ENCODE measurements at regions of chr9 and their contacts with region 1.

Region 1: DNA sequence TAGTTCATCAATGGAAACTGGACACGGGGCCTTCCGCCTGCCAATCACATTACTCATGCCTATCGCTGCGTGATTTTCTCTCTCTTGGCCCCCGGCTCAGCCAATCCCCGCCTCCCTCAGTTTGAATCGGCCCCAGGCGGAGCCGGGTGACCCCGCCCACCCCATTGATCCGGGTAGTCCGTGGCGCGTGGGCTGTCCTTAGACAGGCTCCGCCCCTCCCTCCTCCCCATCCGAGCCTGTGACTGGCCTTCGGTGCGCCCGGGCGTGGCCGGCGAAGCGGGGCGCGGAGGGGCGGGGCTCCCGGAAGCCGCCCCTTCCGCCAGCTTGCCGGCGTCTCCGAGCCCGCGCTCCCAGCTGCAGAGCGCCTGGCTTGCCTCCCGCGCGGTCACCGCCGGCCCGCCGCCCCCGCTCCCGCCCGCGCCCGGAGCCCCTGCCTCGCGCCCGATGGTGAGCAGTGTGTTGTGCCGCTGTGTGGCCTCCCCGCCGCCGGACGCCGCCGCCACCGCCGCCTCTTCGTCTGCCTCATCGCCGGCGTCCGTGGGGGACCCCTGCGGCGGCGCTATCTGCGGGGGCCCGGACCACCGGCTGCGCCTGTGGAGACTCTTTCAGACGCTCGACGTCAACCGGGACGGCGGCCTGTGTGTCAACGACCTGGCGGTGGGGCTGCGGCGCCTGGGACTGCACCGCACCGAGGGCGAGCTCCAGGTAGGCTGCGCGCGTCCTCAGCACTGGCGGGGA is at the start of gene SLC25A25:
- DNase-seq: peak; percentile 100
- H3K4me3 ChIP-seq: peak within 1 kb of the TSS; percentile 87 to 92
- H3K4me3 Mint-ChIP-seq: peak within 1 kb of the TSS in 7 of 8 donors; percentile 89 to 98 (median 94)
- H3K27ac ChIP-seq: peak within 1 kb of the TSS; percentile 86
- H3K27ac Mint-ChIP-seq: peak within 1 kb of the TSS; percentile 83 to 97 (median 91)
- H3K4me1 ChIP-seq: peaks cover 80% of the 10 kb centered on the region
- H3K4me1 Mint-ChIP-seq: peaks cover 36 to 56% (median 45%) of the 10 kb centered on the region in 4 donors
- H3K27me3 ChIP-seq: no peaks in the 10 kb centered on the region
- H3K27me3 Mint-ChIP-seq: no peaks in the 10 kb centered on the region
- total RNA-seq, gene SLC25A25: 22.0 to 26.9 TPM

Region 2: DNA sequence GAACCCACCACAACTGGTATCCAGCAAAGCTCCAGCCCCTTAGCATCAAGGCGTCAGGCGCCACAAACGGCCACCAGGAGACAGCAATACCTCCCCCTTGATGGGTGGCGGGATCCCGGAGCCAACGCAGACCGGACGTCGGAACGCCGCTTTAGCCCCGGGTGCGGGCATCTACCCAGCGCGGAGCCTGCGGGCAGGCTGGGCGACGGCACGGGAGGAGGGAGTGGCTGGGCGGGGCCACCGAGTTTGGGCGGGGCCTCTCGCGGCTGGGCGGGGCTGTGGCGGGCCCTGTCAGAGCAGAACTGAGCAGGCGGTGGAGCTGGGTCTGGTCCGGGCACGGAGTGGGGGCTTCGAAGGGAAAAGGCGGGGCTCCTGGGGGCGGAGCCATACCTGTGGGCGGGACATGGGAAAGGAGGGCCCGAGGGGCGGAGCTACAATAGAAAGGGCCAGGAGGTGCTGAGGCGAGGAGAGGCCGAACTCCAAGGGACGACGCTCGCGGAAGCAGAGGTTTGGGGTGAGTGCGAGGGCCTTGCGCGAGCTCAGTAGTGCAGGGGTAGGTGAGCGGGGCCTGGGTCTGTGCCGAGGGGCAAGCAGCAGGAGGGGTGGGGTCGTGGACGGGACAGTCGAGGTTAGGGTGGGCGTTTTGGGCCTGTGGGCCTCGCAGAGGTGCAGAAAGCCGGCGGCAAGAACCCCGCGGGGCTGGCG is 843.7 kb before region 1 on chr9:
- CTCF ChIA-PET with region 1: no interaction called
- POLR2A ChIA-PET with region 1: interaction called, 3 read pairs
- intact Hi-C with region 1: loop called (anchors 10 kb)
- DNase-seq: peak; percentile 86 to 90 (median 87)
- H3K4me3 ChIP-seq: peak overlapping the region in 1 of 2 donors; percentile 53
- H3K4me3 Mint-ChIP-seq: peak overlapping the region; percentile 77 to 90 (median 87)
- H3K27ac ChIP-seq: no peak overlapping the region
- H3K27ac Mint-ChIP-seq: peak overlapping the region; percentile 79 to 96 (median 93)
- H3K4me1 ChIP-seq: peaks cover 35% of the 10 kb centered on the region
- H3K4me1 Mint-ChIP-seq: peaks cover 23 to 48% (median 33%) of the 10 kb centered on the region in 4 donors
- H3K27me3 ChIP-seq: no peaks in the 10 kb centered on the region
- H3K27me3 Mint-ChIP-seq: peaks cover 0 to 6% of the 10 kb centered on the region in 2 donors

Region 3: DNA sequence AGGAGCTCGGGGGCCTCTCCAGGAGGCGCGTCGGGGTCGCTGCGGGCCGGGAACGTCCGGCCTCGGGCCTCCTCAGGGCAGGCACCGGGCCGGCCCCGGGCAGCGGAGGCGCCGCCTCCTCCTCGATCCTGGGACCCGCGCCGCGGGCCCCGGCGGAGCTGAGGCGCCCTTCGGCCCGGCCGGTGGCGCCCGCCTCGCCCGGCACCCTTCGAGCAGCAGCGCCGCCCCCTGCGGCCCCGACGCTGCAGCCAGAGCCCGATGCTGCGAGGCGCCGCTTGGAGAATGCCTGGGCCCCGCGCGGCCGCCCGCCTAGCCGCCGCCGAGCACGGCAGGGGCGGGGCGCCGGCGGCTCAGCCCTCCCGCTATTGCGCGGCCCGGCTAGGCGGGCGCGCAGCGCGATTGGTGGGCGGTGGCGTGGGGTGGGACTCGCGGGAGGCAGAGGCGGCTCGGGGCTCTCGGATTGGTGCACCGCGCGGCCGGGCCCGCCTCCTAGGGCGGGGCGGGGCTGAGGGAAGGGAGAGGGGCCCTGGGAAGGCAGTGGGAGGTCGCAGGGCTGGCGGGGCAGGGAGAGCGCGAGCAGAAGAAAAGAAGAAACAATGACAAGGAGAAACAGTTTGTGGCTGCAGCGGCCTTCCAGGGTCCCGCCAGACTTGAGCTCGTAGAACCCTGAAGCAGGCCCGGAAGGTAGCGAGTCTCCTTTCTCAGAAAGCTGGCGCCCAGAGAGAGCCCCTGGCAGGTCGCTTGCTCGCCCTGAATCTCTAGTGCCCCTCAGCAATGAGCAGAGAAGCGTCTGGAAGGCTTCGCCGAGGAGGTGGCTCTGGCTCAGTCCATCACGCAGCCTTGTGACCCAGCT is 87.1 kb before region 1 on chr9 and contains the start of gene EEIG1:
- CTCF ChIA-PET with region 1: interaction called, 3 read pairs
- POLR2A ChIA-PET with region 1: interaction called, 22 read pairs
- intact Hi-C with region 1: loop called (anchors 1 kb)
- DNase-seq: peak; percentile 96 to 99 (median 97)
- H3K4me3 ChIP-seq: peak within 1 kb of the TSS; percentile 72 to 92
- H3K4me3 Mint-ChIP-seq: peak within 1 kb of the TSS; percentile 94 to 98 (median 97)
- H3K27ac ChIP-seq: peak within 1 kb of the TSS; percentile 78
- H3K27ac Mint-ChIP-seq: peak within 1 kb of the TSS; percentile 92 to 97 (median 94)
- H3K4me1 ChIP-seq: peaks cover 46% of the 10 kb centered on the region
- H3K4me1 Mint-ChIP-seq: peaks cover 27 to 51% (median 38%) of the 10 kb centered on the region in 4 donors
- H3K27me3 ChIP-seq: no peaks in the 10 kb centered on the region
- H3K27me3 Mint-ChIP-seq: no peaks in the 10 kb centered on the region
- total RNA-seq, gene EEIG1: 516 to 550 TPM

Region 4: GRCh38 chr9:128081056-128081455 is 13.0 kb after region 1 on chr9:
- CTCF ChIA-PET with region 1: interaction called, 15 read pairs
- POLR2A ChIA-PET with region 1: interaction called, 63 read pairs
- intact Hi-C with region 1: loop called (anchors 1 kb)
- DNase-seq: no peak
- H3K4me3 ChIP-seq: no peak overlapping the region
- H3K4me3 Mint-ChIP-seq: peak overlapping the region in 1 of 8 donors; percentile 22
- H3K27ac ChIP-seq: no peak overlapping the region
- H3K27ac Mint-ChIP-seq: peak overlapping the region; percentile 3 to 83 (median 57)
- H3K4me1 ChIP-seq: peaks cover 52% of the 10 kb centered on the region
- H3K4me1 Mint-ChIP-seq: peaks cover 42 to 67% (median 54%) of the 10 kb centered on the region in 4 donors
- H3K27me3 ChIP-seq: no peaks in the 10 kb centered on the region
- H3K27me3 Mint-ChIP-seq: no peaks in the 10 kb centered on the region

Region 5: GRCh38 chr9:128103589-128103962 is 35.5 kb after region 1 on chr9:
- CTCF ChIA-PET with region 1: interaction called, 11 read pairs
- POLR2A ChIA-PET with region 1: interaction called, 5 read pairs
- intact Hi-C with region 1: no loop called
- DNase-seq: peak in 4 of 5 donors; percentile 29 to 41 (median 31)
- H3K4me3 ChIP-seq: no peak overlapping the region
- H3K4me3 Mint-ChIP-seq: peak overlapping the region in 2 of 8 donors; percentile 17 to 47
- H3K27ac ChIP-seq: no peak overlapping the region
- H3K27ac Mint-ChIP-seq: peak overlapping the region; percentile 77 to 94 (median 84)
- H3K4me1 ChIP-seq: peaks cover 42% of the 10 kb centered on the region
- H3K4me1 Mint-ChIP-seq: peaks cover 14 to 55% (median 30%) of the 10 kb centered on the region in 4 donors
- H3K27me3 ChIP-seq: no peaks in the 10 kb centered on the region
- H3K27me3 Mint-ChIP-seq: no peaks in the 10 kb centered on the region

Region 6: DNA sequence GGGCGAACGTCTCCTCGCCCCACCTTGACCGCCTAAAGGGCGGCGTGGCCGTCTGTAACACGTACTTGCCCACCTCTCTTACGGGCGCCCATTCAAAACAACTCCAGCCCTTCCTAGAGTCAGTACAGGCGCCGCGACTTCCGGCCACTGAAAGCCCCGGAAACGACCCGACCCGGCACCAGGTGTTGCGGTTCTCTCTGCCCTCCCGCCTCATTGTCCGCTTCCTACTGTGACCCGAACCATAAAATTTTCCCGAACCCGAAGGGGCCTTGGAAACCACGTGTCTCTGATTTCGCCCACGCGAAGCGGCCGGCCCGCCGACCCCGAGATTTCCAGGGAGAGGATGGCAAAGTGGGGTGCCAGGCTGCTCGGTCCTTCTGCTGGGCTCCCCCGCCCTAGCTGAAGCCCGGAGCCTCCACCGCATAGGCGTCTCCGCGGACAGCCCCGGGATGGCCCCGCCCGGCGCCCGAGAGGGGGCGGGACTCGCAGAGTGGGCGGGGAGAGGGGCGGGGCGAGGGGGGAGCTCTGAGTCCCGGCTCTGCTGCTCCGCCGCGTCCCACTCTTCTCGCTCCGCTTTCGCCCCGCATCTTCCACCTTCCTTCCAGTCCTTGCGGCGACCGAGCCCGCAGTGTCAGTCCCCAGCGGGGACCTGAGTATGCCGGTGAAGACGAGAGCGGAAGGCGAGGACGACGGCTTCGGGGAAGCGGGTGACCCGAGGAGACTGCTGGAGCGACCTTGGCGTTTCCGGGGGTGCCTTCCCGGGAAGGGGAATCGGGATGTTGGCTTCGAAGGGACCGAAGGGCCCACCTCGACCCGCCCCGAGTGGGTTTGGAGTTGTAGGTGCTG is 60.2 kb after region 1 on chr9:
- CTCF ChIA-PET with region 1: interaction called, 6 read pairs
- POLR2A ChIA-PET with region 1: interaction called, 7 read pairs
- intact Hi-C with region 1: loop called (anchors 1 kb)
- DNase-seq: peak; percentile 90 to 94 (median 93)
- H3K4me3 ChIP-seq: peak overlapping the region; percentile 86 to 95
- H3K4me3 Mint-ChIP-seq: peak overlapping the region; percentile 96 to 100 (median 99)
- H3K27ac ChIP-seq: peak overlapping the region; percentile 81
- H3K27ac Mint-ChIP-seq: peak overlapping the region; percentile 98 to 100 (median 99)
- H3K4me1 ChIP-seq: peaks cover 37% of the 10 kb centered on the region
- H3K4me1 Mint-ChIP-seq: peaks cover 24 to 46% (median 33%) of the 10 kb centered on the region in 4 donors
- H3K27me3 ChIP-seq: no peaks in the 10 kb centered on the region
- H3K27me3 Mint-ChIP-seq: peaks cover 0 to 2% of the 10 kb centered on the region in 2 donors

Measured in CD4-positive, alpha-beta memory T cell (primary cell).